ENCODE measurements at regions of chr17 and their contacts with region 1.

Region 1: GRCh38 chr17:65013613-65014391 is 42.7 kb downstream of the GNA13 start:
- H3K4me3 Mint-ChIP-seq: no peak overlapping the region
- H3K27ac Mint-ChIP-seq: no peak overlapping the region
- H3K4me1 Mint-ChIP-seq: peaks cover 55% of the 10 kb centered on the region
- H3K27me3 Mint-ChIP-seq: no peaks in the 10 kb centered on the region

Region 2: GRCh38 chr17:64920026-64920418 is 93.8 kb before region 1 on chr17:
- intact Hi-C with region 1: no loop called
- H3K4me3 Mint-ChIP-seq: peak overlapping the region; percentile 82
- H3K27ac Mint-ChIP-seq: peak overlapping the region; percentile 95
- H3K4me1 Mint-ChIP-seq: peaks cover 19% of the 10 kb centered on the region
- H3K27me3 Mint-ChIP-seq: no peaks in the 10 kb centered on the region

Region 3: GRCh38 chr17:65055348-65056261 is 41.8 kb after region 1 on chr17:
- intact Hi-C with region 1: loop called (anchors 5 kb)
- H3K4me3 Mint-ChIP-seq: peak overlapping the region; percentile 90
- H3K27ac Mint-ChIP-seq: peak overlapping the region; percentile 99
- H3K4me1 Mint-ChIP-seq: peaks cover 71% of the 10 kb centered on the region
- H3K27me3 Mint-ChIP-seq: no peaks in the 10 kb centered on the region